Activated CD4-positive, alpha-beta T cell treated with anti-CD3 and anti-CD28 coated beads, Interleukin-2, amount 10 ng/mL, durations not matched to agents 24 days and 14 days (primary cell): ENCODE measurements at regions of chr18 and their contacts with region 1.

Region 1: GRCh38 chr18:36688020-36688965 is 140.5 kb downstream of the TPGS2 start:
- DNase-seq: peak; percentile 85
- H3K4me3 Mint-ChIP-seq: no peak overlapping the region
- H3K27ac Mint-ChIP-seq: no peak overlapping the region
- H3K4me1 Mint-ChIP-seq: no peaks in the 10 kb centered on the region
- H3K27me3 Mint-ChIP-seq: peaks cover 2% of the 10 kb centered on the region

Region 2: DNA sequence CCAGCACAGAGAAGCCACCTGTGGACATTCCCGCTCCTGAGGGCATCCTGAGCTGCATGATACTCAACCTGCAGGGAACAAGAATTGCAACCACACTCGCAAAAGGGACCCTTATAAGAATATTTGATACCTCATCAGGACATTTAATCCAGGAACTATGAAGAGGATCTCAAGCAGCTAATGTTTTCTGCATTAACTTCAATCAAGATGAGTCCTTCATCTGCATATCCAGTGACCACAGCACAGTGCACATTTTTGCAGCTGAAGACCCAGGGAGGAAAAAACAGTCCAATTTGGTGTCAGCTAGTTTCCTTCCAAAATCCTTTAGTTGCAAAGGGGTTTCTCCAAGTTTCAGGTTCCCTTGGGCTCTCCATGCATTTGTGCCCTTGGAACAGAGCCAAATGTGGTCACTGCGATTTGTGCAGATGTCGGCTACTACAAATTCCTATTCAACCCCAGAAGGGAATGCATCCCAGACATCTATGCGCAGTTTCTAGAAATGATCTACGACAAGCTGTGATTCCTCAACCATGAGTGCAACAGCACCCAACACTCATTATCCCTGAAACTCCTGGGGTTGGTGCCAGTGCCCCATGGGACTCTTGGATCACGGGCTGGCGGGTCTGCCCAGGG is 414.1 kb before region 1 on chr18:
- intact Hi-C with region 1: no loop called
- DNase-seq: no peak
- H3K4me3 Mint-ChIP-seq: no peak overlapping the region
- H3K27ac Mint-ChIP-seq: no peak overlapping the region
- H3K4me1 Mint-ChIP-seq: no peaks in the 10 kb centered on the region
- H3K27me3 Mint-ChIP-seq: peaks cover 25% of the 10 kb centered on the region

Region 3: GRCh38 chr18:36757081-36757480 is 68.8 kb after region 1 on chr18:
- intact Hi-C with region 1: loop called (anchors 5 kb)
- DNase-seq: no peak
- H3K4me3 Mint-ChIP-seq: no peak overlapping the region
- H3K27ac Mint-ChIP-seq: no peak overlapping the region
- H3K4me1 Mint-ChIP-seq: peaks cover 4% of the 10 kb centered on the region
- H3K27me3 Mint-ChIP-seq: peaks cover 2% of the 10 kb centered on the region

Region 4: DNA sequence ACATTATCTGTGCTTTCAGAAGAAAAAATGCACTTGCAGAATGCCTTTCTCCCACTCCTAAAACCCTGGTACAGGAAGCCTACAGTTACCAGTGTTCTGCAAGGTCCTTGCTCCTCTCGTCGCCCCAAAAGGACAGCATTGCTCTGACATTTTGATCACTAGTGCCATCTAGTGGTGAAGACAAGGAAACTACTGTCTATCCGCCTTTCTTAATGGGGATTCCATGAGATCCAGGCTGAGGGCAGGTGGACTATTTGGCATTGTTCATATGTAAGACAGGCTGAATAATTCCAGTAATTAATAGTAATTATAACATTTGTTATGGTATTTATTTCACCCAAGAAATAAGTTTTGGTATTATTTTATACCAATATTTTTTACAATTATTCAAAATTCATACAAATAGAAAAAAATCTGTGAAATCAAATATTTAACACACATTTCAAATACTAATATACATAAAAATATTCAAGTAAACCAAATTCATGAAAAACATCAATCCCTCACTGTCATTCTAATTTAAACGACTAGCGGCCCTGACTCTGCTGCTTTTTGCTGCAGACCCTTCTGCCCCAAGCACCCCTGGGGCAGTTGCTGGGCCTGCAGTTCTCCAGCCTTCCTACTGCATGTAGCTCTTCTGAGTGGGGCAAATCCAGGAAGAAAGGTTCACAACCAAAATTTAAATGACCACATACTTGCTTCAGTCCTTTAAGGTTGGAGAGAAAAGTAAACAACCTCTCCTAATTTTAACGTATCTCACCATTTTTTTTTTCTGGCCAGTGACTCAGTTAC is 121.5 kb after region 1 on chr18:
- intact Hi-C with region 1: loop called (anchors 1 kb)
- DNase-seq: peak; percentile 82
- H3K4me3 Mint-ChIP-seq: no peak overlapping the region
- H3K27ac Mint-ChIP-seq: no peak overlapping the region
- H3K4me1 Mint-ChIP-seq: peaks cover 9% of the 10 kb centered on the region
- H3K27me3 Mint-ChIP-seq: no peaks in the 10 kb centered on the region

Region 5: DNA sequence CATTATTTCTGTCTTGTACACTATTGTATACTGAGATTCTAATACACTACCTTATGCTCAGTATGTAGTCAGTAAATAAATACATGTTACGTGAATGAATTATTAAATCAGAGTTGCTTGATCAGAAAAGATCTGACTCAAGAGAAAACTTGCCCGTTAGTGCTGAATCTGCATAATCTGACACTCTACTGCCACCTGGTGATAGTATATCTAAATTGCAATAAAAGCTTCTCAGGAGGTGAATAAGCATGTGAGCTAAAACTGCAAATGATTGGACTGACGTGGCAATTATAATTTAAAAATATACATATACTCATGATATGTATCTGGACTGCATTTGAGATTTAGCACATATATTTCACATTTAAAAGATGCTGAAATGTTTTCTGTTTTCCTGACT is 211.0 kb after region 1 on chr18:
- intact Hi-C with region 1: loop called (anchors 5 kb)
- DNase-seq: no peak
- H3K4me3 Mint-ChIP-seq: no peak overlapping the region
- H3K27ac Mint-ChIP-seq: no peak overlapping the region
- H3K4me1 Mint-ChIP-seq: peaks cover 2% of the 10 kb centered on the region
- H3K27me3 Mint-ChIP-seq: no peaks in the 10 kb centered on the region